ENCODE measurements at regions of chr18 and their contacts with region 1.

Region 1: GRCh38 chr18:62714671-62715435 is 488 bp upstream of the PHLPP1 start:
- DNase-seq: peak; percentile 88
- ATAC-seq: peak; percentile 79
- H3K4me3 Mint-ChIP-seq: peak overlapping the region; percentile 91
- H3K27ac Mint-ChIP-seq: peak overlapping the region; percentile 89
- H3K4me1 Mint-ChIP-seq: peaks cover 37% of the 10 kb centered on the region
- H3K27me3 Mint-ChIP-seq: no peaks in the 10 kb centered on the region
- CTCF ChIP-seq: no peak

Region 2: GRCh38 chr18:61085761-61086160 is 1629.1 kb before region 1 on chr18:
- CTCF ChIA-PET with region 1: no interaction called
- POLR2A ChIA-PET with region 1: no interaction called
- intact Hi-C with region 1: no loop called
- DNase-seq: no peak
- ATAC-seq: no peak
- H3K4me3 Mint-ChIP-seq: no peak overlapping the region
- H3K27ac Mint-ChIP-seq: no peak overlapping the region
- H3K4me1 Mint-ChIP-seq: no peaks in the 10 kb centered on the region
- H3K27me3 Mint-ChIP-seq: no peaks in the 10 kb centered on the region
- CTCF ChIP-seq: no peak

Region 3: GRCh38 chr18:62522504-62523254 is 192.2 kb before region 1 on chr18 and contains the start of gene ZCCHC2:
- CTCF ChIA-PET with region 1: no interaction called
- POLR2A ChIA-PET with region 1: interaction called, 15 read pairs
- intact Hi-C with region 1: loop called (anchors 1 kb)
- DNase-seq: peak; percentile 100
- ATAC-seq: peak; percentile 75
- H3K4me3 Mint-ChIP-seq: peak within 1 kb of the TSS; percentile 95
- H3K27ac Mint-ChIP-seq: peak within 1 kb of the TSS; percentile 84
- H3K4me1 Mint-ChIP-seq: peaks cover 31% of the 10 kb centered on the region
- H3K27me3 Mint-ChIP-seq: no peaks in the 10 kb centered on the region
- CTCF ChIP-seq: no peak
- total RNA-seq, gene ZCCHC2: 28.6 and 29.4 TPM in 2 replicates

Region 4: GRCh38 chr18:62729487-62730386 is 14.9 kb after region 1 on chr18:
- CTCF ChIA-PET with region 1: interaction called, 4 read pairs
- POLR2A ChIA-PET with region 1: interaction called, 4 read pairs
- intact Hi-C with region 1: loop called (anchors 1 kb)
- DNase-seq: no peak
- ATAC-seq: peak; percentile 28
- H3K4me3 Mint-ChIP-seq: peak overlapping the region; percentile 28
- H3K27ac Mint-ChIP-seq: peak overlapping the region; percentile 30
- H3K4me1 Mint-ChIP-seq: peaks cover 39% of the 10 kb centered on the region
- H3K27me3 Mint-ChIP-seq: no peaks in the 10 kb centered on the region
- CTCF ChIP-seq: no peak

Region 5: GRCh38 chr18:62868645-62869044 is 153.8 kb after region 1 on chr18:
- CTCF ChIA-PET with region 1: interaction called, 3 read pairs
- POLR2A ChIA-PET with region 1: interaction called, 10 read pairs
- intact Hi-C with region 1: loop called (anchors 1 kb)
- DNase-seq: no peak
- ATAC-seq: no peak
- H3K4me3 Mint-ChIP-seq: no peak overlapping the region
- H3K27ac Mint-ChIP-seq: no peak overlapping the region
- H3K4me1 Mint-ChIP-seq: peaks cover 15% of the 10 kb centered on the region
- H3K27me3 Mint-ChIP-seq: no peaks in the 10 kb centered on the region
- CTCF ChIP-seq: no peak

Region 6: DNA sequence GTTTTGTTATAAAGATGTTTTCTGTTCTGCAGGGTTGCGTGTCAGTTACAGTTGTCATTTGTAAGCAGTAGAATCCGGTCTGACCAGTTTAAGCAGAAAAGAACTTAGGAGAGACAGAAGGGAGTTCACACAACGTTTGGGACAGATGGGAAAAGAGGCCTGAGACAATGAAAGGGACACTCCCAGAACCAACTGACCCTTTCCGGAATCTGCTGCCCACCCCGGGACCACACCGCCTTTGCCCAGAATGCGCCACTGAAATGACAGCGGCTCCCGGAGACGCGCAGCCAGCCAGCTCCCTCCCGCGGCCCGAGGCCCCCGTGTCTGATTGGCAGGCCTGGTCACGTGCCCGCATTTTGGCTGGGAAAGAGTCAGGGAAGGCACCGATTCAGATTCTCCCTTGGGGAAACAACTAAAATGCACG is 360.1 kb after region 1 on chr18:
- CTCF ChIA-PET with region 1: no interaction called
- POLR2A ChIA-PET with region 1: interaction called, 3 read pairs
- intact Hi-C with region 1: loop called (anchors 1 kb)
- DNase-seq: peak; percentile 45
- ATAC-seq: peak; percentile 58
- H3K4me3 Mint-ChIP-seq: peak overlapping the region; percentile 78
- H3K27ac Mint-ChIP-seq: peak overlapping the region; percentile 0
- H3K4me1 Mint-ChIP-seq: peaks cover 25% of the 10 kb centered on the region
- H3K27me3 Mint-ChIP-seq: no peaks in the 10 kb centered on the region
- CTCF ChIP-seq: no peak

Region 7: GRCh38 chr18:63267975-63268721 is 553.3 kb after region 1 on chr18:
- CTCF ChIA-PET with region 1: no interaction called
- POLR2A ChIA-PET with region 1: no interaction called
- intact Hi-C with region 1: no loop called
- DNase-seq: no peak
- ATAC-seq: no peak
- H3K4me3 Mint-ChIP-seq: no peak overlapping the region
- H3K27ac Mint-ChIP-seq: peak overlapping the region; percentile 10
- H3K4me1 Mint-ChIP-seq: peaks cover 54% of the 10 kb centered on the region
- H3K27me3 Mint-ChIP-seq: no peaks in the 10 kb centered on the region
- CTCF ChIP-seq: no peak

Region 8: GRCh38 chr18:63339920-63340484 is 625.1 kb after region 1 on chr18:
- CTCF ChIA-PET with region 1: interaction called, 3 read pairs
- POLR2A ChIA-PET with region 1: no interaction called
- intact Hi-C with region 1: loop called (anchors 5 kb)
- DNase-seq: no peak
- ATAC-seq: peak; percentile 45
- H3K4me3 Mint-ChIP-seq: no peak overlapping the region
- H3K27ac Mint-ChIP-seq: no peak overlapping the region
- H3K4me1 Mint-ChIP-seq: no peaks in the 10 kb centered on the region
- H3K27me3 Mint-ChIP-seq: no peaks in the 10 kb centered on the region
- CTCF ChIP-seq: no peak

Region 9: GRCh38 chr18:63969960-63970802 is 1255.3 kb after region 1 on chr18 and contains the start of gene SERPINB8:
- CTCF ChIA-PET with region 1: no interaction called
- POLR2A ChIA-PET with region 1: no interaction called
- intact Hi-C with region 1: loop called (anchors 1 kb)
- DNase-seq: peak; percentile 71
- ATAC-seq: peak; percentile 82
- H3K4me3 Mint-ChIP-seq: peak within 1 kb of the TSS; percentile 95
- H3K27ac Mint-ChIP-seq: peak within 1 kb of the TSS; percentile 94
- H3K4me1 Mint-ChIP-seq: peaks cover 51% of the 10 kb centered on the region
- H3K27me3 Mint-ChIP-seq: peaks cover 6% of the 10 kb centered on the region
- CTCF ChIP-seq: no peak
- total RNA-seq, gene SERPINB8: 20.9 and 29.5 TPM in 2 replicates